Lower leg skin (tissue), 4 donors: ENCODE measurements at regions of chr14 and their contacts with region 1.

Region 1: GRCh38 chr14:64823305-64823861 is 56.3 kb downstream of the SPTB start:
- DNase-seq: peak; percentile 54 to 92
- H3K4me3 ChIP-seq: no peak overlapping the region
- CTCF ChIP-seq: peak in 1 of 3 donors; percentile 26
- POLR2A ChIP-seq: no peak

Region 2: GRCh38 chr14:64891839-64892375 is 68.5 kb after region 1 on chr14:
- intact Hi-C with region 1: loop called (anchors 10 kb)
- DNase-seq: no peak
- H3K4me3 ChIP-seq: no peak overlapping the region
- CTCF ChIP-seq: no peak
- POLR2A ChIP-seq: no peak

Region 3: GRCh38 chr14:64971943-64972791 is 148.8 kb after region 1 on chr14 and contains the start of gene RAB15:
- intact Hi-C with region 1: loop called (anchors 10 kb)
- DNase-seq: no peak
- H3K4me3 ChIP-seq: peak within 1 kb of the TSS; percentile 33
- CTCF ChIP-seq: no peak
- POLR2A ChIP-seq: no peak
- total RNA-seq, gene RAB15: 5.5 to 9.4 (median 7.2) TPM

Region 4: DNA sequence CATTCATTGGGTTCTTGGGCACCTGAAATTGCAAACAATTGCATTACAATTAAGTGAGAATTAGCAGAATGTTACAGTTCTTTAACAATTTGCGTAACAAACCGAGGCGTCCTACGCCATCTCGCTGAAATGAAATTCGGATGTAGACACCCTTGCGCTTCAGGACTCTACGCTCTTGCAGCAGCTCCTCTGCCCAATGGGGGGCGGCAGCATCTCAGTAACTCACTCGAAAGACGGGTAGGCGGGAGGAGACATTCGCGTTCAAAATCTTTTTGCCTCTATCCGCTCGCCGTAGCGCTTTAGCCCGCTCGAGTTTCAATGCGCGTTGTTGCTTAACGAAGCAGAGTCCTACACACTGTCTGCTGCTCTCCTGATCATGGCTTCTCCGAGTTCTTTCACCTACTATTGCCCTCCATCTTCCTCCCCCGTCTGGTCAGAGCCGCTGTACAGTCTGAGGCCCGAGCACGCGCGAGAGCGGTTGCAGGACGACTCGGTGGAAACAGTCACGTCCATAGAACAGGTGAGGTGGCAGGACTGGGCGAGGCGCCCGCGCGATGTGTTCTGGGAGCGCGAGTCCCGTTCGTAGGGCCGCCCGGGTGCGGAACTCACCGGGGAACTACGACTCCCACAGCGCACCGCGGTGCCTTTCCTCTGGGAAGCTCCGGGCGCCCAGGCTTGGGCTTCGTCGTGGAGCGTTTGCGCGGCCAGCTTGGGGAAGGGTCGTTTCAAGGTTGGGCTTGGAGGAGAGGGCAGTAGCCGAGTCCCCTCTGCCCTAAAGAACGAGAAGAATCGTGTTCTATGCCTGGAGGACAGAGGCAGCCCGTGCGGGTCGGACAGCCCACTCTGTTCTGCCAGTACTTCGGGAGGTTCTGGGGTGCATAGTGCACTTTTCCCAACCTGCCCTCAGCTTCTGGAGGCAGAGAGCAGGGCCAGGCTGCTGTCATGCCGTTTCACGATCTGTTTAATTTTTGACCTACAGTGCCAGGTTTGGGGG is 163.5 kb after region 1 on chr14 and contains the start of gene FNTB:
- intact Hi-C with region 1: no loop called
- DNase-seq: peak; percentile 94 to 99
- H3K4me3 ChIP-seq: peak within 1 kb of the TSS; percentile 71
- CTCF ChIP-seq: peak in 1 of 3 donors; percentile 59
- POLR2A ChIP-seq: no peak
- total RNA-seq, gene FNTB: 34.0 to 48.6 (median 38.8) TPM